ENCODE measurements at regions of chr2 and their contacts with region 1.

Region 1: GRCh38 chr2:214781226-214781625 is 28.3 kb downstream of the BARD1 start:
- DNase-seq: no peak
- H3K4me3 Mint-ChIP-seq: no peak overlapping the region
- H3K27ac Mint-ChIP-seq: no peak overlapping the region
- H3K4me1 Mint-ChIP-seq: no peaks in the 10 kb centered on the region
- H3K27me3 Mint-ChIP-seq: no peaks in the 10 kb centered on the region
- CTCF ChIP-seq: no peak

Region 2: GRCh38 chr2:214809751-214810564 is 28.7 kb after region 1 on chr2:
- CTCF ChIA-PET with region 1: no interaction called
- POLR2A ChIA-PET with region 1: interaction called, 17 read pairs
- intact Hi-C with region 1: no loop called
- DNase-seq: peak; percentile 97
- H3K4me3 Mint-ChIP-seq: peak overlapping the region; percentile 98
- H3K27ac Mint-ChIP-seq: peak overlapping the region; percentile 94
- H3K4me1 Mint-ChIP-seq: peaks cover 17% of the 10 kb centered on the region
- H3K27me3 Mint-ChIP-seq: no peaks in the 10 kb centered on the region
- CTCF ChIP-seq: no peak

Measured in MCF 10A (cell line).